Posterior vena cava (tissue), 2 donors: ENCODE measurements at regions of chr9 and their contacts with region 1.

Region 1: DNA sequence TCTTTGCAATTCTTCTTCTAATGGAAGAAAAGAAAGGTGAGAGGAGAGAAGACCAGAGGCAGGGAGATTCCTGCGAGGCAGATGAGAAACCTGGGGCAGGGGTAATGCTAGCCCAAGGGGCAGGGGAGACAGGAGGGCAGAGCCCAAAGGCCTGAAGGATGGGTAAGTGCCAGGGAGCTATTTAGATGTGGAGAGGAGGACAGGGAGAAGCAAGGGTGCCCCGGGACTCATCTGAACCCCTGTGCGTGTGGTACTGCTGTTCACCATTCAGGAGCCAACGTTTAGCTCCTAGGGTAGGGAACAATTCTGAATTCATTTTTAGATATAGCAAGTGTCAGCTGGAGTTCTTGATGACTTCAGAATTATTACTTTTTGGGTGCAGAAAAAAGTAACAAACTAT is 122.7 kb upstream of the ALDH1B1 start:
- DNase-seq: no peak

Region 2: DNA sequence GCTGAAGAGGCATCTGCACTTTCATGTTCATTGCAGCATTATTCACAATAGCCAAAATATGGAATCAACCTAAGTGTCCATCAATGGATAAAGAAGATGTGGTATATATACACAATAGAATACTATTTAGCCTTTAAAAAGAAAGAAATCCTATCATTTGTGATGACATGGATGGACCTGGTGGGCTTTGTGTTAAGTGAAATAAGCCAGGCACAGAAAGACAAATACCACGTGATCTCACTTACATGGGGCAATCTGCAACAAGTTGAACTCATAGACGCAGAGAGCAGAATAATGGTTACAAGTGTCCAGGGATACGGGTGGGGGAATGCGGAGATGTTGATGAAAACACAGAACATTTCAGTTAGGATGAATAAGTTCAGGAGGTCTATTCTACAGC is 56.3 kb after region 1 on chr9:
- intact Hi-C with region 1: loop called in 1 of 2 experiments (anchors 2 kb)
- DNase-seq: no peak

Region 3: GRCh38 chr9:38445154-38446043 is 175.6 kb after region 1 on chr9:
- intact Hi-C with region 1: no loop called
- DNase-seq: no peak